Gastrocnemius medialis (tissue), 4 donors: ENCODE measurements at regions of chr2 and their contacts with region 1.

Region 1: DNA sequence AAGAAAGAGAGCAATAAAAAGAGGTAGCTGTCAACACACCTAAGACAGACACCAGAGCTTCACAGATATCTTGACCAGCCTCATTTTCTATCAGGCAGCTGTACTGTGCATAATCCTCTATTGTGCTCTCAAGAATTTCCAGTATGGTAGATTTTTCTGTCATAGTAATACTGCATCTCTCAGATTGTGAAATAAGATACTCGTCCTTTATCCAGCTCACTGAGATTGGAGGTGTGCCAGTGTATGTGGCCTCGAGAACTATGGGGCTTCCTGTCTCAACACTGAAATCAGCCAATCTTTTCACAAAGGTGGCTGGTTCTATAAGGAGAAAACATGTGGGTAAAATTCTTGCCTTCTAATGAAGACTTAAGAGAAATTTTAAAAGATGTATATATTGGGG is 88.9 kb downstream of the TTN start:
- DNase-seq: no peak
- ATAC-seq: peak in 1 of 2 donors; percentile 37
- H3K4me3 ChIP-seq: no peak overlapping the region
- H3K27ac ChIP-seq: peak overlapping the region in 1 of 4 donors; percentile 46
- H3K4me1 ChIP-seq: peaks cover 33 to 66% of the 10 kb centered on the region in 2 donors
- H3K27me3 ChIP-seq: no peaks in the 10 kb centered on the region
- CTCF ChIP-seq: no peak
- POLR2A ChIP-seq: no peak

Region 2: GRCh38 chr2:178679891-178680290 is 38.4 kb before region 1 on chr2:
- in situ Hi-C with region 1: no loop called
- intact Hi-C with region 1: loop called (anchors 5 kb)
- DNase-seq: no peak
- ATAC-seq: peak in 1 of 2 donors; percentile 11
- H3K4me3 ChIP-seq: no peak overlapping the region
- H3K27ac ChIP-seq: peak overlapping the region in 2 of 4 donors; percentile 12 to 64
- H3K4me1 ChIP-seq: peaks cover 10 to 25% of the 10 kb centered on the region in 2 donors
- H3K27me3 ChIP-seq: no peaks in the 10 kb centered on the region
- CTCF ChIP-seq: no peak
- POLR2A ChIP-seq: no peak